ENCODE measurements at regions of chr4 and their contacts with region 1.

Region 1: GRCh38 chr4:56907489-56908205 is at the start of gene REST:
- DNase-seq: peak; percentile 72 to 75
- H3K4me3 ChIP-seq: peak within 1 kb of the TSS; percentile 36 to 92 (median 56)
- H3K27ac ChIP-seq: peak within 1 kb of the TSS; percentile 63 to 96 (median 84)
- H3K4me1 ChIP-seq: peaks cover 15 to 34% of the 10 kb centered on the region in 2 donors
- H3K27me3 ChIP-seq: no peaks in the 10 kb centered on the region
- CTCF ChIP-seq: peak in 1 of 6 experiments; percentile 9
- POLR2A ChIP-seq: peak in 1 of 2 donors; percentile 84
- total RNA-seq, gene REST: 33.2 to 50.3 (median 41.1) TPM

Region 2: DNA sequence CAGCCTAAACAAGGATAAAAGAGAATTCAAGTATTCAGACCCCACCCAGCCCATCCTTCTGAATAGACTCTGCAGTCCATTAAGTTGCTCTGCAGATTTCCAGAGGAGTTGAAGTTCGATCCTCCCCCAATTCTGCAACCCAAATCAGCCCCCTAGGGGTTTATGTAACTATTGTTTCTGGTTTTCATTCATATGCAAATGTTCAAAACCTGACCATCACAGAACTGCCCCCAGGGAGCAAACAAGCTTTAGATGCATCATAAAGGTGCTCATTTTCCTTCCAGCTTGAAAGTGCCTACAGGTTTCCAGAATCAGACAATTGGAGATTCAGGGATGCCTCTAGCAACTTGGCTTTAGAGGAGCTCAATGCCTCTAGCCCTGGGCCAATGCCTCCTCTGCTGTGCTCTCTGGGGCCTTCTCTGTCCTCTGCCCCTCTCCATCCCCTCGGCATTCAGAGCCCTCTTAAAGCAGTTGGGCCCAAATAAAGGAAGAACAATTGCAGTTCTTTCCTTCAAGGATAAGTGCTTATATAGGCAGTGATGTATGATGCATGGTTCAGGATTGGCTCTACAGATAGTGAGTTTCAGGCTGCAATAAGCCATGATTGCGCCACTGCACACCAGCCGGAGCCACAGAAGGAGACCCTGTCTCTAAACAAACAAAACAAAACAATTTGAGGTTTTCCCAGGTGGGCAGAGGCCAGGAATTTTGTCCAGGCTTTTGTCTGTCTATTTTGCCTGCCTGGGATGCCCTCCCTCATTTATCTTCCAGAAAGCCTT is 62.7 kb before region 1 on chr4:
- intact Hi-C with region 1: no loop called
- DNase-seq: no peak
- H3K4me3 ChIP-seq: no peak overlapping the region
- H3K27ac ChIP-seq: no peak overlapping the region
- H3K4me1 ChIP-seq: no peaks in the 10 kb centered on the region
- H3K27me3 ChIP-seq: no peaks in the 10 kb centered on the region
- CTCF ChIP-seq: no peak
- POLR2A ChIP-seq: no peak

Region 3: DNA sequence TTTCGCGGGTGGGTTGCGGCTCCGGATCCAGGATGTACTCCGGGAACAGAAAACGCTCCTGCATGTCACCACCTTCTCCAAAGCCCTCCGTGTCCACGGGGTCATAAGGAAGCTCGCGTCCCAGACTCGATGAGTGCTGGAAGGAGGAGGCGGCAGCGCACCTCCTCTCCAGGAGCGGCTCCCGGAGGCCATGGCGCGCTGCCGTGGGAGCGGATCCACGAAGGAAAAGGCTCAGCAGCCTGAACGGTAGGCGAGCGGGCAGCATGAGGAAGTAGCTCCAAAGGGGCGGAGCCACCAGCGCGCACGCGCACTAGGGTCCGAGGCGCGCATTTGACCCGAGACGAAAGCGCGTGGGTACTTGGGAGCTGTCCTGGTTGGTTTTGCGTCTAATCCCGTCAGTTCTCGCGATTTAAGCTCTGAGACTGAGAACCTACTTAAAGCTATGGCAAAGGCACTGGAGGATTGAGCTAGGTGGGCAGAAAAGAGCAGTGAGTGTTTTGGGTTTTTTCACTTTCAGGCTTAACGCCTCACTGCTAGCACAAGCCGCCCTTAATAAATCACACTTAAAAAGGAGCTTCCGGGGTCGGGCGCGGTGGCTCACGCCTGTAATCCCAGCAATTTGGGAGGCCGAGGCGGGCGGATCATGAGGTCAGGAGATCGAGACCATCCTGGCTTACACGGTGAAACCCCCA is 69.8 kb after region 1 on chr4 and contains the start of gene NOA1:
- intact Hi-C with region 1: loop called (anchors 10 kb)
- DNase-seq: peak; percentile 98 to 99
- H3K4me3 ChIP-seq: peak within 1 kb of the TSS; percentile 52 to 83 (median 79)
- H3K27ac ChIP-seq: peak within 1 kb of the TSS; percentile 83 to 94 (median 94)
- H3K4me1 ChIP-seq: peaks cover 29 to 42% of the 10 kb centered on the region in 2 donors
- H3K27me3 ChIP-seq: no peaks in the 10 kb centered on the region
- CTCF ChIP-seq: no peak
- POLR2A ChIP-seq: peak in 1 of 2 donors; percentile 87
- total RNA-seq, gene NOA1: 22.1 to 27.4 (median 24.7) TPM

Region 4: GRCh38 chr4:56995525-56995924 is 87.9 kb after region 1 on chr4:
- intact Hi-C with region 1: no loop called
- DNase-seq: no peak
- H3K4me3 ChIP-seq: no peak overlapping the region
- H3K27ac ChIP-seq: no peak overlapping the region
- H3K4me1 ChIP-seq: no peaks in the 10 kb centered on the region
- H3K27me3 ChIP-seq: no peaks in the 10 kb centered on the region
- CTCF ChIP-seq: no peak
- POLR2A ChIP-seq: no peak

Measured in thyroid gland (tissue), 4 donors.